Spleen (tissue), 13 donors: ENCODE measurements at regions of chr2 and their contacts with region 1.

Region 1: GRCh38 chr2:206800506-206801417 is 35.4 kb downstream of the FASTKD2 start:
- DNase-seq: no peak
- H3K4me3 ChIP-seq: peak overlapping the region in 1 of 8 donors; percentile 45
- H3K27ac ChIP-seq: no peak overlapping the region
- H3K4me1 ChIP-seq: peaks cover 5 to 28% (median 18%) of the 10 kb centered on the region in 6 donors
- H3K27me3 ChIP-seq: no peaks in the 10 kb centered on the region
- CTCF ChIP-seq: peak; percentile 39 to 74 (median 66)
- POLR2A ChIP-seq: no peak

Region 2: GRCh38 chr2:206981739-206982340 is 181.1 kb after region 1 on chr2:
- intact Hi-C with region 1: loop called (anchors 10 kb)
- DNase-seq: peak; percentile 79
- H3K4me3 ChIP-seq: no peak overlapping the region
- H3K27ac ChIP-seq: peak overlapping the region in 3 of 8 donors; percentile 32 to 55 (median 44)
- H3K4me1 ChIP-seq: peaks cover 0 to 36% (median 17%) of the 10 kb centered on the region in 6 donors
- H3K27me3 ChIP-seq: no peaks in the 10 kb centered on the region
- CTCF ChIP-seq: peak in 9 of 11 experiments; percentile 43 to 80 (median 65)
- POLR2A ChIP-seq: no peak

Region 3: DNA sequence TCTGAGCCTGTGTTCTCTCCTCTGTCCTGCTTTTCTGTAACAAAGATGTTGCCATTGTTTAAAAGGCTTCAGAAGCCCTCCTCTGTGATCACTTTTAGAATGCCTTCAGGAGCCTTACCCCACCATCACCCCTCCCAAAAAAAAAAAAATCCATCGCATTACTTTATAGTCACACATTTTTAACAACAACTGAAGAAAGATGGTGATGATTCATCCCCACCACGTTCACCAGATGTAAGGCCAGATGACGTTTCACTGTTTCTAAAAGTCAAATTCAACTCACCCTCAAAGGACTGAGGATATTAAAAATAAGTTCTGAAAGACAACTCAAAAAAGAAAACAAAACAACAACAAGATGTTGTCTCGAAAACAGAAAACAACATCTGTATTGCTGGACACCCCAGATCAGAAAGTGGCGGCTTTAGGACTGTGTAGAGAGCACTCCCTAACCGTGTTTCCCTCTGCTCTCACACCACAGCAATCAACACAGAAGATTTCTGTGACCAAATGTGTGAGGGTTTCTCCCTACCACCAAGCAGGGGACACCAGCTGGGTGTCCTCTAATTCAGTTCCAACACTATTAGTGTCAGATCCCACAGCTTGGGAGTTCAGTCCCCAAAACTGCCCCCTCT is 667.1 kb after region 1 on chr2:
- intact Hi-C with region 1: loop called (anchors 5 kb)
- DNase-seq: no peak
- H3K4me3 ChIP-seq: no peak overlapping the region
- H3K27ac ChIP-seq: no peak overlapping the region
- H3K4me1 ChIP-seq: peaks cover 0 to 5% (median under 1%) of the 10 kb centered on the region in 6 donors
- H3K27me3 ChIP-seq: no peaks in the 10 kb centered on the region
- CTCF ChIP-seq: no peak
- POLR2A ChIP-seq: no peak